ENCODE measurements at regions of chr2 and their contacts with region 1.

Region 1: DNA sequence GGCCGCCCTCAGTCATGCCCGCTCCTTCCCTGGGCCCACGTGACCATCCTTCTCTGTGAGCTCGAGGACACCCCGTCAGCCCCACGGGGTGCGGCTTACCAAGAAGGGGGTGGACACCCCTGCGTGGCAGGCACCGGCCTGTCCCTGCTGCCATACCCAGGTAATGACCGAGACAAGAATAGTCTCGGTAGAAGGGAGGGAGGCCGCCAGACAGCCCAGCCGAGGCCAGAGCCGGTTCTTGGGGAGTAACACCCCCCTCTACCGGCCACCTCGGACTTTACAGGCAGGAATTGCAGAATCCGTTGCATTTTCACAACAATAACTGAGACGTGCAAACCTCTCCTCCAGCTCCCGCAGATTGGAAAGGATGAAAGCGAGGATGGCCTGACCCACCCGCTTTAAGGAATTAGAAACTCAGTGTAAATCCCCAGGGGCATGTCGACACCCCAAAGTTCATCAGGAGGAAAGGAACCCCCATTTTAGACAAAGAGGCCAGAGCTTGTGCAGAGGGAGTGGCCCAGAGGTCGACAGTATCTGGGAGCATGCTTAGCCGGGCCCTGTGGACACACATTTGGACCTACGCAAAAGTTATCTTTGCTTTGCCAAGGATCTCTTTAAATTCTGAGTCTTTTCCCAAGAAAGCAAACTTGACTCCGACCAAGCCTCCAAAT is 60.1 kb upstream of the GLI2 start:
- H3K4me3 Mint-ChIP-seq: no peak overlapping the region
- H3K27ac Mint-ChIP-seq: no peak overlapping the region
- H3K4me1 Mint-ChIP-seq: no peaks in the 10 kb centered on the region
- H3K27me3 Mint-ChIP-seq: peaks cover 25% of the 10 kb centered on the region

Region 2: DNA sequence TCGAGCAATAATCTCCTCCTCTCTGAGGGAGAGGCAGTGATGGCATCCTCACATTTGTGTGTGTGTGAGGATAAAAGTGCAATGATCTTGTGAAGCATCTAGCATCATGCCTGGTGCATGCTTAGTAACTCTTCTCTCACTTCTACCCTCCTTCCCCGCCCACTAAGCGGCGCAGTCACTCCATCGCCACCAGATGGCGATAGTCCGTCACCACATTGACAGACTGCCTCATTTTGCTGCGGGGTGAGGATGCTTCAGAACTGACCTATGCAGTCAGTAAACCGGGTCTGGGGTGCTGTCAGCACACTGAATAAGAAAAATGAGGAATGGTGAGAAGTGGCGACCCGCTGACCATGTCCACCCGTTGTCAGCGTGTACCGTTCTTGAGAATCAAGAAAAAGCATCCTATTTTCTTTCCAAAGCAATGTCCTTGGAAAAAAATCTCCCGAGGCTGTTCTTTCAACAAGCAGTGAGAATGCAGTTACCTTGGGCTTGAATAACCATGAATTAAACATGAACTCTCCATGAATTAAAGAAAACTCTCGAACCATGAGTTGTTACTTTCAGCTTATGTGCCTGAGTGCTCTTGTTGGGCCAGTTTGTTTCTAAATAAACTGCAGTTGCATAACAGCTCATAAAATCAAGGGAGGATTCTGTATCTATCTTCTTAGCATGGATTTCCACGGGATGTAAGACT is 1033.9 kb before region 1 on chr2:
- intact Hi-C with region 1: loop called (anchors 10 kb)
- H3K4me3 Mint-ChIP-seq: no peak overlapping the region
- H3K27ac Mint-ChIP-seq: no peak overlapping the region
- H3K4me1 Mint-ChIP-seq: no peaks in the 10 kb centered on the region
- H3K27me3 Mint-ChIP-seq: peaks cover 3% of the 10 kb centered on the region

Region 3: GRCh38 chr2:120109186-120110061 is 566.2 kb before region 1 on chr2:
- intact Hi-C with region 1: loop called (anchors 10 kb)
- H3K4me3 Mint-ChIP-seq: no peak overlapping the region
- H3K27ac Mint-ChIP-seq: no peak overlapping the region
- H3K4me1 Mint-ChIP-seq: peaks cover 32% of the 10 kb centered on the region
- H3K27me3 Mint-ChIP-seq: peaks cover 24% of the 10 kb centered on the region

Region 4: GRCh38 chr2:120343433-120344105 is 332.0 kb before region 1 on chr2:
- intact Hi-C with region 1: loop called (anchors 2 kb)
- H3K4me3 Mint-ChIP-seq: peak overlapping the region; percentile 34
- H3K27ac Mint-ChIP-seq: no peak overlapping the region
- H3K4me1 Mint-ChIP-seq: peaks cover 50% of the 10 kb centered on the region
- H3K27me3 Mint-ChIP-seq: peaks cover 60% of the 10 kb centered on the region

Region 5: GRCh38 chr2:120605231-120605935 is 70.2 kb before region 1 on chr2:
- intact Hi-C with region 1: no loop called
- H3K4me3 Mint-ChIP-seq: no peak overlapping the region
- H3K27ac Mint-ChIP-seq: no peak overlapping the region
- H3K4me1 Mint-ChIP-seq: peaks cover 6% of the 10 kb centered on the region
- H3K27me3 Mint-ChIP-seq: no peaks in the 10 kb centered on the region

Measured in dendritic cell treated with granulocyte-macrophage colony-stimulating factor and Interleukin-4, amounts not matched to agents 40 ng/mL and 50 ng/mL, for 4 days (primary cell).